Breast epithelium (tissue), 4 donors: ENCODE measurements at regions of chr7 and their contacts with region 1.

Region 1: DNA sequence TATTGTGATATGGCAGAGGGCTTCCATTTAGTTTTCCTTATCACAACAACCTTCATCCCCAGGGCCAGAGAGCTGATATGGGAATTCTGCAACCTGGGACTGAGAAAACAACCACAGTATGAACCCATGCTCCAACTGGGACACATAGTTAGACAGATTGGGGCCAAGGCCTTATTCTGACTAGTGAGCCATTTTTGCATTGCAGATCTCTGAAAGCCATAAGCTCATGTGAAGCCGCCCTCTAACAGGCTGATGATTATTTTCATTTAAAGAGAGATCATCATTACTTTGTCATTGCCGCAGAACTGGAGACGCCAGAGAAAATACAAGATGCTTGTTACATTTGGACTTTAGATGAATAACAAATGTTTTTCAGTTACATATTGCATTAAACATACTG is 791.7 kb upstream of the POM121L12 start:
- DNase-seq: no peak
- H3K4me3 ChIP-seq: no peak overlapping the region
- H3K27ac ChIP-seq: no peak overlapping the region
- H3K4me1 ChIP-seq: no peaks in the 10 kb centered on the region
- H3K27me3 ChIP-seq: no peaks in the 10 kb centered on the region
- CTCF ChIP-seq: no peak
- POLR2A ChIP-seq: no peak

Region 2: GRCh38 chr7:52283335-52283734 is 39.6 kb after region 1 on chr7:
- intact Hi-C with region 1: no loop called
- DNase-seq: no peak
- H3K4me3 ChIP-seq: no peak overlapping the region
- H3K27ac ChIP-seq: no peak overlapping the region
- H3K4me1 ChIP-seq: no peaks in the 10 kb centered on the region
- H3K27me3 ChIP-seq: no peaks in the 10 kb centered on the region
- CTCF ChIP-seq: no peak
- POLR2A ChIP-seq: no peak

Region 3: GRCh38 chr7:52876402-52876801 is 632.7 kb after region 1 on chr7:
- intact Hi-C with region 1: no loop called
- DNase-seq: no peak
- H3K4me3 ChIP-seq: no peak overlapping the region
- H3K27ac ChIP-seq: no peak overlapping the region
- H3K4me1 ChIP-seq: no peaks in the 10 kb centered on the region
- H3K27me3 ChIP-seq: no peaks in the 10 kb centered on the region
- CTCF ChIP-seq: no peak
- POLR2A ChIP-seq: no peak

Region 4: GRCh38 chr7:53437336-53437735 is 1193.7 kb after region 1 on chr7:
- intact Hi-C with region 1: loop called (anchors 5 kb)
- DNase-seq: no peak
- H3K4me3 ChIP-seq: no peak overlapping the region
- H3K27ac ChIP-seq: no peak overlapping the region
- H3K4me1 ChIP-seq: no peaks in the 10 kb centered on the region
- H3K27me3 ChIP-seq: no peaks in the 10 kb centered on the region
- CTCF ChIP-seq: no peak
- POLR2A ChIP-seq: no peak